ENCODE measurements at regions of chr17 and their contacts with region 1.

Region 1: DNA sequence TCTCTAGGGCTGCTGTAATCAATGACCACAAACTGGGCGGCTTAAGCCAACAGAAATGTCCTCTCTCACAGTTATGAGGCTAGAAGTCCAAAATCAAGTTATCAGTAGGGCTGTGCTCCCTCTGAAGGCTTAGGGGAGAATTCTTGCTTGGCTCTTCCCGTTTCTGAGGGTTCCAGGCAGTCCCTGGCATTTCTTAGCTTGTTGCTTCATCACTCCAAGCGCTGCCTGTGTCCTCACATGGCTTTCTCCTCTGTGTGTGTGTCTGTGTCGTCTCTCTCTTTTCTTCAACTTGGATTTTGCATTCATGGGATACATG is 13.7 kb upstream of the CDC42EP4 start:
- DNase-seq: no peak
- ATAC-seq: 0 out of 2 replicates have a peak, but pooled peaks have one; percentile 40
- H3K4me3 ChIP-seq: no peak overlapping the region
- H3K27ac ChIP-seq: no peak overlapping the region
- H3K4me1 ChIP-seq: no peaks in the 10 kb centered on the region
- H3K27me3 ChIP-seq: no peaks in the 10 kb centered on the region
- CTCF ChIP-seq: no peak

Region 2: GRCh38 chr17:73175962-73176565 is 149.4 kb before region 1 on chr17:
- CTCF ChIA-PET with region 1: no interaction called
- POLR2A ChIA-PET with region 1: interaction called, 13 read pairs
- in situ Hi-C with region 1: no loop called
- intact Hi-C with region 1: no loop called
- DNase-seq: no peak
- ATAC-seq: no peak
- H3K4me3 ChIP-seq: no peak overlapping the region
- H3K27ac ChIP-seq: no peak overlapping the region
- H3K4me1 ChIP-seq: no peaks in the 10 kb centered on the region
- H3K27me3 ChIP-seq: no peaks in the 10 kb centered on the region
- CTCF ChIP-seq: no peak

Region 3: DNA sequence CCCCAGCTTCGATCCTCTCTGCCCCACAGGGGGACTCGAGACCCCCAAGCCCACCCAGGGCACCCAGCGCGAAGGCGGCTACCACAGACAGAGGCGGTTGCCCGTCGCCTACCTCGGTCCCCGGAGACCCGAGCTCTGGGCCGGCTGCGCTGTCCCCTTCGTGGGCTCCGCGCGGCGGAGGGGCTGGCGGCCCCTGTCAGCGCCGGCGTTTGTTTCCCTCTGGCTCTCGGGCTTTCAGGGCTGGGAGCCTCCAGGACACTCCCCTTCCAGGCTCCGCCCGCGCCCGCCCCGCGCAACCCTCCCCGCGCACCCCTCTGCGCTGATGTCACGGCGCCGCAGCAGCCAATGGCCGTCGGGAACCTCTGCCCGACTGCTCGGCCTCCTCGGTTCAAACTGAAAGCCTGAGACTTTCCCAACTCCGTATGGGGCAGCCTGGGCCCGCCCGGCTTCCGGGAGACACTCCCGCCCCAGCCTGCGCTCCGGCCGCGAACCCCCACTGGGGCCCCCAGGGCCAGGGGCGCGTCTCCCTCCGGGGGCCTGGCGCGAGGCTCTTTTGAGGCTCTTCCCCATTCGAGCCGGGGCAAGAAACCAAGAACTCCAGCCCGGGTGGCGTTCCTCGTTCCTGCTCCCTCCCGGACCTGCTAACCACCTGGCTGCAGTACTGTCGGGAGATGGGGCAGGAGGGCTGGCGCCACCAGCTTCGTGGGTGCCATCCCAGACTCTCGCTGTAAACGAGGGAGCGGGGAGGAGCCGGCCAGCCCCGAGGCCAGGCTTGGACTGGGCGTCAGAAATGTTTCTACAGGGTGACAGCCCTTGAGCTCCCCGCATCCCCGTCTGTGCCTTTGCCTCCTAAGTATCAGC is 13.5 kb before region 1 on chr17 and contains the start of gene CDC42EP4:
- CTCF ChIA-PET with region 1: no interaction called
- POLR2A ChIA-PET with region 1: interaction called, 11 read pairs
- in situ Hi-C with region 1: no loop called
- intact Hi-C with region 1: no loop called
- DNase-seq: no peak
- ATAC-seq: peak; percentile 92
- H3K4me3 ChIP-seq: peak within 1 kb of the TSS; percentile 90
- H3K27ac ChIP-seq: peak within 1 kb of the TSS; percentile 87
- H3K4me1 ChIP-seq: peaks cover 25% of the 10 kb centered on the region
- H3K27me3 ChIP-seq: no peaks in the 10 kb centered on the region
- CTCF ChIP-seq: no peak
- total RNA-seq, gene CDC42EP4: 65.9 TPM

Region 4: DNA sequence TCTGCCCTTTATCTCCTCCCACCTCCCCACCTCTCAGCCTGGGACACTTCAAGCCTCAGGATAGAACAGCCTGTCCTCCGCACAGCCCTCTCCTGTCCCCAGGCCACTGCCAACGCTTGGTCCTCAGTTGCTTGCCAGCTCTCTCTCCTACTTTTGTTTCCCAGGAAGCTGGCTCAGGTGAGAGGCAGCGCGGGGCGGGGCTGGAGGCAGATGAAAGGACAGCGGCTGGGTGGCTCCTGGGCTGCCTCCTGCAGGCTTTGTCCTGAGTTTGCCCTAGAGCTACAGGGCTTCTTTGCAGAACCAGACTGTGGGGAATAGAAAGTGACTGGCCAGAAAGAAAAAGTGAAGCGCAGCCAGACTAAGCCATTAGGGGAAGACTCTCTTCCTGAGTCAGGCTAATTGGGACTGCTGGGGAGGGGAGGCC is 34.5 kb after region 1 on chr17:
- CTCF ChIA-PET with region 1: interaction called, 3 read pairs
- POLR2A ChIA-PET with region 1: interaction called, 14 read pairs
- in situ Hi-C with region 1: no loop called
- intact Hi-C with region 1: no loop called
- DNase-seq: no peak
- ATAC-seq: peak; percentile 39
- H3K4me3 ChIP-seq: no peak overlapping the region
- H3K27ac ChIP-seq: no peak overlapping the region
- H3K4me1 ChIP-seq: no peaks in the 10 kb centered on the region
- H3K27me3 ChIP-seq: no peaks in the 10 kb centered on the region
- CTCF ChIP-seq: no peak

Region 5: GRCh38 chr17:73393962-73394361 is 68.5 kb after region 1 on chr17:
- CTCF ChIA-PET with region 1: no interaction called
- POLR2A ChIA-PET with region 1: no interaction called
- in situ Hi-C with region 1: no loop called
- intact Hi-C with region 1: no loop called
- DNase-seq: no peak
- ATAC-seq: no peak
- H3K4me3 ChIP-seq: no peak overlapping the region
- H3K27ac ChIP-seq: no peak overlapping the region
- H3K4me1 ChIP-seq: no peaks in the 10 kb centered on the region
- H3K27me3 ChIP-seq: no peaks in the 10 kb centered on the region; the same call in 1 of the 2 replicates
- CTCF ChIP-seq: no peak

Measured in Panc1 (cell line).